Naive thymus-derived CD4-positive, alpha-beta T cell (primary cell): ENCODE measurements at regions of chr11 and their contacts with region 1.

Region 1: DNA sequence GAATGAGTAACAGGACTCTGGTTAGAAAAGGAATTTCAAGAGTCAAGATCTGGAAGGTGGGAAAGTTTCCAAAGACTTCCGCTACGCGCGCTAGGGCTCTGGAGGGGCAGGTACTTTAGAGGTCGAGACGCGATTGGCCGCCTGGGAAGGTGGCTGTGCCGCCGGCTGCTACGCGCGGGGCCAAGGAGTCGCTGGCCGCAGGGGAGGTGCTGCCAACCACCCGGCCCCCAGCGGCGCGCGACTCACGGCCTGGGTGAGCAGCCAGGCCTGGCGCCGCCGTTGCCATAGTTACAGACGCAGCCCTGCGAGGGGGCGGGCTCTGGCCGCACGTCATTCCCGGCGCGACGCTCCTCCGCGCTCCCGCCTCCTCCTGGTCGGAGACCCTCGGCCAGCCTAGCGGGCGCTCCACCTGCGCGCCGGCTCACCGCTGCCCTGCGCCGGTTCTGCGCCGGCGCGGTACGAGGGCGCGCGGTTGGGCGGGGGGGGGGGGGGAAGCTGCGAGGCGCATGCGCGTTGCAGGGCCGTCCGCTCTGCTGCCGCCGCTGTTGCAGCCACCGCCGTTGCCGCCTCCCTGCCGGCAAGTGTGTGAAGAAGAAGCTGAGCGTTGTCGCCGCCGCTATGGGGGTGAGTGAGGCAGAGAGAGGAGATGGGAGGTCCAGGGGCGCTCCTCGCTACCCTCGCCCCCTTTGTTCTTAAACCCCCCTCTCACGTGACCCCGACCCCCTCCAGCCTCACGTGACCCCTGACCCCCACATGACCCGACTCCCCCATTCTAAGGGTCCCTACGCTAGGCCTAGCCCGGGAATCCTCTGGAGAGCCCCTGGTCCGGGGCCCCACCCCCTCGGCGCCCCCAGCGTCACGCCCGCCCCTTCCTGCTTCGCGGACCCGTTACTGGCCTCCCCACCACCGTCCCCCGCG is at the start of gene NAA40:
- DNase-seq: peak; percentile 78 to 91 (median 84)
- ATAC-seq: peak; percentile 92
- H3K4me3 ChIP-seq: peak within 1 kb of the TSS; percentile 84
- H3K4me3 Mint-ChIP-seq: peak within 1 kb of the TSS; percentile 80 to 99 (median 94)
- H3K27ac ChIP-seq: peak within 1 kb of the TSS; percentile 73
- H3K27ac Mint-ChIP-seq: peak within 1 kb of the TSS; percentile 81 to 95 (median 89)
- H3K4me1 ChIP-seq: peaks cover 11 to 18% of the 10 kb centered on the region in 2 donors
- H3K4me1 Mint-ChIP-seq: peaks cover 22 to 28% (median 27%) of the 10 kb centered on the region in 7 donors
- H3K27me3 ChIP-seq: no peaks in the 10 kb centered on the region
- H3K27me3 Mint-ChIP-seq: peaks cover 0 to 2% (median 0%) of the 10 kb centered on the region in 5 donors
- total RNA-seq, gene NAA40: 21.0 to 39.8 (median 24.8) TPM

Region 2: DNA sequence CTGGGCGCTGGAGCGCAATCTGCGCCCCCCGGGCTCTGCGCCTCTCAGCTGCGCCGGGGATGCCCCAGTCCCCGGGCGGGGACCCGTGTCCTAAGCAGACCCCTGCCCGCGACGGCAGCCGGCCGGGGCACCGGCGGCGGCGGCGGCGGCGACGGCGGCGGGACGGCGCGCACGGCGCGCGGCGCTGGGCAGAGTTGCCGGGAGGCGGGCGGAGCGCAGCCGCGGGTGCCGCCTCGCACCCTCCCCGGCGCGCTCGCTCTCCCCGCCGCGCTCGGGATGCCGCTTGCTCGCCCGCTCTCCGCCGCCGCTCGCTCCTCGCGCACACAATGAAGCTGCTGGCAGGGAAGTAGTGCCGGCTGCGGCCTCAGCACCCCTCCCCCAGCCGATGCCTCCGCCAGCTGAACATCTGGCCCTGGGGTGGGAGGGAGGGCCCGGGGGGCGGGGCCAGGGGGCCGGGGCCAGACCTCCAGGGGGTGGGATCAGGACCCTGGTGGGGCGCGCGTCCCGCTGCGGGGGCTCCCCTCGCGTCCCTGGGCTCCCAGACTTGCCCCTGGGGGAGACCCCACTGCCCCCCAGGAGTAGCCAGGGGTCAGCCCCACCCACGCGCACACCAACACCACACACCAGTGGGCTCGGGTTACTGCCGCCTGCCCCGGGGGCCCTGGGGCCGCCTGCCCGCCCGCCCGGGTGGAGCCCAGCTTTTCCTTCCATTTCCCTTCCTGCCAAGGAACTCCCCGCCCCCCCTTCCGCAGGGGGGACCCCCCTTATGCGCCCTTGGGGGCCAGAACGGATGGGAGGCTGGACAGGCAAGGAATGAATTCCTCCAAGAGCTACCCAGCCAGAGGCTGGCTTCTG is 21.7 kb before region 1 on chr11 and contains the start of gene RCOR2:
- CTCF ChIA-PET with region 1: interaction called, 5 read pairs
- POLR2A ChIA-PET with region 1: interaction called, 4 read pairs
- intact Hi-C with region 1: loop called in 1 of 2 experiments (anchors 1 kb)
- DNase-seq: peak; percentile 26 to 62 (median 54)
- ATAC-seq: peak; percentile 69
- H3K4me3 ChIP-seq: peak within 1 kb of the TSS; percentile 62
- H3K4me3 Mint-ChIP-seq: peak within 1 kb of the TSS; percentile 73 to 91 (median 83)
- H3K27ac ChIP-seq: no peak within 1 kb of the TSS
- H3K27ac Mint-ChIP-seq: peak within 1 kb of the TSS in 3 of 9 donors; percentile 36 to 64 (median 42)
- H3K4me1 ChIP-seq: peaks cover 8 to 20% of the 10 kb centered on the region in 2 donors
- H3K4me1 Mint-ChIP-seq: peaks cover 0 to 18% (median 15%) of the 10 kb centered on the region in 7 donors
- H3K27me3 ChIP-seq: no peaks in the 10 kb centered on the region
- H3K27me3 Mint-ChIP-seq: peaks cover 0 to 22% (median 0%) of the 10 kb centered on the region in 5 donors
- total RNA-seq, gene RCOR2: 0.07 TPM in 1 of 5 experiments, not detected in the others

Region 3: DNA sequence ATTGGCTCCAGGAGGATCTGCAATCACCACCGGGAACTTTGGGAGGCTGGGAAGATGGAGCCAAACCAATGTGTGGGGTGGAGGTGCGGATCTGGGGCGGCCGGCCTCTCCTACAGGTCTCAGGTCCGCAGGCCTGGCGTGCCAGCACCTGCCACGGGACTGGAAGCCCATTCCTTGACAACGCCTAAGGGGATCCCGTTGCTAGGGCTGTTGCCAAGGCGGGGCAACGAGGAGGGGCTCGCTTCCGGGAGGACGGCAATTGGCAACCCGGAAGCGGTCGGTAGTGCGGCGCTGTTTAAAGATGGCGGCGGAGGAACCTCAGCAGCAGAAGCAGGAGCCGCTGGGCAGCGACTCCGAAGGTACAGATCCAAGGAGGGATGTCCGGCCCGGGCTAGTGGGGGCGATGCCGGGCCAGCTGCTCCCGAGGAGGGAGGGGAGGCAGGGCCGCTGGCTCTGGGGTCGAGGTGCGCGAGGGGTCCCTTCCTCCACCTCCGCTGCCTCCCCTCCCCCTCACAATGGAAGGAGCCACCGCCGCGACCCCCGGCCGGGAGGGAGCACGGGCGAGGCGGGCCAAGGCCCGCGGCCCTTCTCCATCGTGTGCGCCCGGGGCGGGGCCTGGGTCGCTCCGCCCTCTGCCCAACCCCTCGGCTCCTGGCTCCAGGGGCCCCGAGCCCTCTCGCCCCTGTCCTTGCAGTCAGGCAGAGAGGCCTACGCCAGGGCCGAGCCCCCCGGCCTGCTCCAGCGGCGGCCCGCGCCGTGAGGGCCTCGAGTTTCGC is 47.6 kb after region 1 on chr11 and contains the start of gene OTUB1:
- CTCF ChIA-PET with region 1: no interaction called
- POLR2A ChIA-PET with region 1: no interaction called
- intact Hi-C with region 1: loop called in 1 of 2 experiments (anchors 1 kb)
- DNase-seq: peak; percentile 64 to 86 (median 83)
- ATAC-seq: peak; percentile 94
- H3K4me3 ChIP-seq: peak within 1 kb of the TSS; percentile 100
- H3K4me3 Mint-ChIP-seq: peak within 1 kb of the TSS; percentile 91 to 99 (median 97)
- H3K27ac ChIP-seq: peak within 1 kb of the TSS; percentile 89
- H3K27ac Mint-ChIP-seq: peak within 1 kb of the TSS; percentile 95 to 99 (median 98)
- H3K4me1 ChIP-seq: peaks cover 14 to 20% of the 10 kb centered on the region in 2 donors
- H3K4me1 Mint-ChIP-seq: peaks cover 11 to 40% (median 35%) of the 10 kb centered on the region in 7 donors
- H3K27me3 ChIP-seq: no peaks in the 10 kb centered on the region
- H3K27me3 Mint-ChIP-seq: no peaks in the 10 kb centered on the region
- total RNA-seq, gene OTUB1: 59.4 to 99.0 (median 72.5) TPM

Region 4: GRCh38 chr11:64078284-64078683 is 139.5 kb after region 1 on chr11:
- CTCF ChIA-PET with region 1: no interaction called
- POLR2A ChIA-PET with region 1: no interaction called
- intact Hi-C with region 1: no loop called
- DNase-seq: no peak
- ATAC-seq: no peak
- H3K4me3 ChIP-seq: no peak overlapping the region
- H3K4me3 Mint-ChIP-seq: peak overlapping the region in 1 of 10 donors; percentile 26
- H3K27ac ChIP-seq: no peak overlapping the region
- H3K27ac Mint-ChIP-seq: no peak overlapping the region
- H3K4me1 ChIP-seq: no peaks in the 10 kb centered on the region
- H3K4me1 Mint-ChIP-seq: peaks cover 0 to 5% (median 4%) of the 10 kb centered on the region in 7 donors
- H3K27me3 ChIP-seq: no peaks in the 10 kb centered on the region
- H3K27me3 Mint-ChIP-seq: no peaks in the 10 kb centered on the region